ENCODE measurements at regions of chr20 and their contacts with region 1.

Region 1: GRCh38 chr20:5557123-5557522 is 193.1 kb upstream of the SHLD1 start:
- DNase-seq: no peak
- H3K4me3 ChIP-seq: no peak overlapping the region
- CTCF ChIP-seq: no peak
- POLR2A ChIP-seq: no peak

Region 2: DNA sequence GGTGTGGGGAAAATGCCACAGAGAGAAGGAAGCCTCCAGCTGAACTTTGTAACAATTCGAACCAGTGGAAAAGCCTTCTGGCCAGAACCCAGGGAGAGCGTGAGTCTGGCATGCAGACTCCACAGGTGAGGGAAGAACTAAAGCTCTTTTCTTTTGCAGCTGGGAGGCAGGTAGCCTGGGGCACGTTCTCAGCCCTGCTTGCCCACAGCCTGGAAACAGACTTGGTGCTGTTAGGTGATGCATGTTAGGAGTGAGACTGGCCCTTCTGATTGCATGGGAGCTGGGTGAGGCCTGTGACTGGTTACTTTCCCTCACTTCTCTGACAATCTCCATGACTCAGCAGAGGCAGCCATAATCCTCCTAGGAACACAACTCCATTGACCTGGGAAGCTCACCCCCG is 274.6 kb before region 1 on chr20:
- intact Hi-C with region 1: no loop called
- DNase-seq: no peak
- H3K4me3 ChIP-seq: no peak overlapping the region
- CTCF ChIP-seq: no peak
- POLR2A ChIP-seq: no peak

Region 3: DNA sequence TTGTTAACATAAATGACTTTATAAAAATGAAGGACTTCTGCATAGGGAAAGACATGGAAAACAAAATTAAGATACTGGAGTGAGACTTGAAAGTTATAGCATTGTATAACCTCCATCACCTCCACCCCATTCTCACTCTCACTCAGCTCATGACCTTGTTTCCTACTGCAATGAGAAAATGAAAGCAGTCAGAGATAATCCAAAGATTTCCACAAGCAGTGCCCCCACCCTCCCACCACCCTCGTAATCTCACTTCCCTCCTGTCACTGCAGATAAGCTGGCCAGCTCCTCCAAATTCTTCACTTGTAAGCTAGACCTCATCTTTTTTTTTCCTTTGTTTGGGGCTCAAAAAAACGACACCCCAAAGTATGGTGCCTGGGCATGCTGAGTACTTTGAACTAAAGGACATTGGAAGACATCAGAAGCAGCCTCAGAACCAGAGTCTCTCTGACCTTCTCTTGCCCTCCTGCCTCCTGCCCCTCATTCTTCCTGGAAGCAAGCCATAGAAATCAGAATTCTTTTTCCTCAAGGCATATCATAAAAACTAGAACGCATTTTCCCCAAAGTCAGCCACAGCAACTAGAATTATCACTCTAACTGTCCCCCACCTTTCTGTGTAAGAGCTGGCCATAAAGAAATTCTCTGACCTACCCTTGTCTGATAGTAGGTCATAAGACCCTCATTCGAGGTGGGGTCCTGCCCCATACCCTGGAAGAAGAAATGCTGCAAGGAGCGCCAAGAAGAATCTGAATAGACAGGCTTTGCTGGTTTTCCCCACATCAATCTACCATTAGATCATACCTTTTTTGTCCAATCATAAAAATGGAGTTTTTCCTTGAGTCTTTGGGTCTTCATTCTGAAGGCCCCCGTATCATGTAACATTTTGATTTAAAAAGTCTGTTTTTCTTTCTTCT is 187.2 kb before region 1 on chr20:
- intact Hi-C with region 1: no loop called
- DNase-seq: no peak
- H3K4me3 ChIP-seq: no peak overlapping the region
- CTCF ChIP-seq: no peak
- POLR2A ChIP-seq: no peak

Region 4: DNA sequence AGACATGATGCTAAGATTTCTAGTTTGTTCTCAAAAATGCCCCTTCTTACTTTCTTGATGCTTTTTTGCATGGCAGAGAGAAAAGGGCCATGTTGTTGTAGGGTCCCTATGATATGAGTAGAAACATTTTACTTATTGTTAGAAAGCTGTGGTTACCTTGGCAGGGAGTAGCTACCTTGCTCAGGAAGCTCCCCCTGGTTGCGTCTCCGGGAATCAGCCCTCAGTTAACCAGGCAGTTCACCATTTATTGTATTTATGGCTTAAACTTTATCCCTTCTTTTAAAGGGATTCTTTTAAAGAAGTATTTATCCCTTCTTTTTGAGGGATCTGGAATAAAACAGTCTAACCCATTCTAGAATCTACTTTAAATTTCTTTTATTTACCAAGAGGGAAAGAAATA is 126.5 kb before region 1 on chr20:
- intact Hi-C with region 1: no loop called
- DNase-seq: no peak
- H3K4me3 ChIP-seq: no peak overlapping the region
- CTCF ChIP-seq: no peak
- POLR2A ChIP-seq: no peak

Region 5: DNA sequence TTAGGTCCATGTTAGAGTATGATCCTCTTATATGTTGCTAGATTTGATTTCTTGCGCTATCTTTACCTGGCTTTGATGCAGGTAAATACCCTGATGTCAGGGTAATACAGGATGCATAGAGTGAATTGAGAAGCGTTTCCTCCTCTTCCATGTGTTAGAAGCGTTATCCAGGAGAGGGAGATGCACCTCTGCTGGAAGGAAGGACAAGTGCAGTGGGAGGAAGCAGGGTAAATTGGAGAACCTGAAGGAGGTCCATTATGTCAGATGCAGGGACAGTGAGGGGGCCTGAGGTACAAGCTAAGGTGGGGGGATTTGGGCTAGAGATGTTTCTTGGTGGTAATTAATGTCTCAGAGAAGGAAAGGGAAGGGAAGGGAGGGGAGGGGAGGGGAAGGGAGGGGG is 200.8 kb after region 1 on chr20:
- intact Hi-C with region 1: no loop called
- DNase-seq: no peak
- H3K4me3 ChIP-seq: no peak overlapping the region
- CTCF ChIP-seq: no peak
- POLR2A ChIP-seq: no peak

Region 6: DNA sequence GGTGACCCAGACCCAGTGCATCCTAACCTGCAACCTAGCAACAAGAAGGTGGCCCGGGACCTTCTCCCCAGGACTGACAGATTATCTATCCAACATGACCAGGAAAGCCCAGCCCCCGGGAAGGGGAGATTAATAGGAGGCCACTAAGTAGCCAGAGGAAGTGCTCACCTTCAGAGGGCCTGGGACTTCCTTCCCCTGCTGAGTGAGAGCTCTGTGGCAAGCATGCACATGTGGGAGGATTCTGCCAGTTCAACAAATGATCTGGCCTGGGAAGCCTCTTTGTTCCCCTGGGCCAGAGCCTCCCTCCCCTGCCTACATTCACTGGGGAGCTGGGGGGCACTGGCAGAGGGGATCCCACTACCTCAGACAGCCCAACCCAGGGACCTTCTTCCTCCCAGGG is 232.7 kb after region 1 on chr20:
- intact Hi-C with region 1: loop called (anchors 5 kb)
- DNase-seq: peak in 1 of 2 donors; percentile 78
- H3K4me3 ChIP-seq: no peak overlapping the region
- CTCF ChIP-seq: no peak
- POLR2A ChIP-seq: no peak